ENCODE measurements at regions of chr19 and their contacts with region 1.

Region 1: GRCh38 chr19:45474606-45475521 is 7.1 kb downstream of the FOSB start:
- DNase-seq: no peak
- H3K4me3 ChIP-seq: no peak overlapping the region
- CTCF ChIP-seq: no peak
- POLR2A ChIP-seq: no peak

Region 2: DNA sequence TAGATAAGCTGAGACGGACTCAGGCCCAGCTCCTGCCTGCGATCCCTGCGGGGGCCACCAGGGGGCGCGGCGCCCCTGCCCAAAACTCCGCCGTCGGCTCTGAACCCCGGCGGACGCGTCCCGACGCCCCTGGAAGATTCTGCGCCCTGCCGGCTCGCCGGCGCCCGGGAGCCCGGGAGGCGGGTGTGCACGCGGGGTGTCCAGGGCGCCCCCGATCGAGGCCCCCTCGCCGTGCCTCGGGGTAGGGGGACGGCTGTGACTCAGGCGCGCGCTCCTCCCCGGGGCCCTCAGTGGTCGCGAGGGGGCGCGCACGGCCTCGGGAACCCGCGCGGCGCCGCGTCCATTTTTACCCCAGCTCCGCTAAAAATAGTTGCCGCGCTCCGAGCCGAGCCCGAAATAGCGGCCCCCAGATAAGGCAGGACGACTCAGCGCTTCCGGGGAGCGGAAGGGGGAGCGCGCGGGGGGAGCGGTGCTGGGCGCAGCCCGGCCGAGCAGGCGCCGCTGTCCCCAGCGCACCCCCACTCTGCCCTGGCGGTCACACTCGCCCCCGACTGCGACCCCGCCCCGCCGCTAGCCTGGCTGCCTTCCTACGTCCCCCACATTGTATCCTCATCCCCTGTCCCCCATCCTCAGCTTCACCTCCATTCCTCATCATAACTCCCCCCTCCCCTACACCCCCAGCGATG is 35.2 kb before region 1 on chr19:
- intact Hi-C with region 1: loop called (anchors 2 kb)
- DNase-seq: peak in 1 of 2 donors; percentile 97
- H3K4me3 ChIP-seq: peak overlapping the region; percentile 16
- CTCF ChIP-seq: peak in 1 of 3 donors; percentile 78
- POLR2A ChIP-seq: no peak

Measured in lower leg skin (tissue), 4 donors.